GM10248 (cell line): ENCODE measurements at regions of chr6 and their contacts with region 1.

Region 1: DNA sequence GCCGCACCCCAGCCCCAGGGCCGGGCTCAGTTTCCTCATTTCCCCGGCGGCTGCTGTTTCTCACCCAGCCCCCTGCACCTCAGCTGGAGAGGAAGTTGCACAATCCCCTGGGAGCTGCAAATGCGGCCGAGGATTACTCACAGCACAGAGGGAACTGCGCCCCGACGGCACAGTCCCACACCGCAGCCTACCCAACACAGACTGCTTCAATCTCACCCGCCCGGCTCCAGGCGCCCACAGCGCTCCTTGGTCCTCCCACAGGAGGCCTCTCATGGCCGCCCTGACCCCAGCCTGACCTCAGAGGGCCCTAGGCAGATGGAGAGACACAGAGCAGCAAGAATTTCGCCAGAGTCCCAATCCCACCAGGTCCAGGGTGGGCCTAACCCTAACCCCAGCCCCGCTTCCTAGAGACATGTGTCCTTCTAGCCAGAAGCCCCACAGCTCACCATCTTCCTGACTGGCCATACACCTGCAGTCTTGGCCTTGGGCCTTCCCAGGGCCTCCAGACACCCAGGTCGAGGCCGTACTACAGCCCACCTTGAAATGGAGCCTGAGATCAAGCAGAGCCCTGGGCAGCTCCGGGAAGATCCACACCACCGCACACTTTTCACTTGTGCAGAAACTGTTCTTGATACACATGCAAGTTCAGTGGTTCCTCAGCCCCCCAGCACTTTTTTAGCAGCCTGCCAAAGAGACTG is 11.7 kb downstream of the TFEB start:
- DNase-seq: peak; percentile 89
- CTCF ChIP-seq: no peak

Region 2: DNA sequence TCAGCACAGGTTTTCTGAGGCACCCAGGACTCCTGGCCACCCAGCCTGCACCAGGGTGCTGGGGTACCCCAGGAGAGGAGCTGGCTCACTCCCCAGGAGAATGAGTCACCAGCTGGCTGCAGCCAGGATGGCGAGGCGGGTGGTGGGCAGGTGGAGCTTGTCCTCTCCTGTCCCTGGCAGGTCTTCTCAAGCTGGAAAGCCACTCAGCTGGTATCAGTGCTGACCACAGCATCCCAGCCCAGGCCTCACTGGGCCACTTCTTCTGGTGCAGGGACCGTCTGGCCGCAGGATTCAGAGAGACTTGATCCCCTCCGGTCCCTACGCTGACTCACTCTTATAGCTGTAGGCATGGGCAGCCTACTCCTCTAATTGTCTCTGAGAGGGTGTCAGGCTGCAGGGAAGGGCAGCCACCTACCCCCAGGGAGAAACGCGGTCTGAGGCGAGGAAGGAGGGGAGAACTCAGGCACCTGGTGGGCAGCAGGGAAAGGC is 10.5 kb before region 1 on chr6:
- CTCF ChIA-PET with region 1: interaction called, 264 read pairs
- POLR2A ChIA-PET with region 1: interaction called, 33 read pairs
- DNase-seq: no peak
- CTCF ChIP-seq: no peak